Aorta (tissue), 5 donors: ENCODE measurements at regions of chr5 and their contacts with region 1.

Region 1: GRCh38 chr5:170745481-170746071 is 37.9 kb upstream of the GABRP start:
- DNase-seq: no peak
- ATAC-seq: peak; percentile 45
- H3K4me3 ChIP-seq: no peak overlapping the region
- H3K27ac ChIP-seq: no peak overlapping the region
- H3K4me1 ChIP-seq: no peaks in the 10 kb centered on the region
- H3K27me3 ChIP-seq: no peaks in the 10 kb centered on the region

Region 2: GRCh38 chr5:170791325-170791954 is 45.9 kb after region 1 on chr5:
- intact Hi-C with region 1: loop called (anchors 1 to 2 kb)
- DNase-seq: peak; percentile 72 to 82
- ATAC-seq: peak; percentile 59
- H3K4me3 ChIP-seq: no peak overlapping the region
- H3K27ac ChIP-seq: no peak overlapping the region
- H3K4me1 ChIP-seq: no peaks in the 10 kb centered on the region
- H3K27me3 ChIP-seq: no peaks in the 10 kb centered on the region